Activated CD8-positive, alpha-beta T cell treated with anti-CD3 and anti-CD28 coated beads, Interleukin-2, amount 10 ng/mL, durations not matched to agents 7 days and 5 days (primary cell): ENCODE measurements at regions of chr11 and their contacts with region 1.

Region 1: GRCh38 chr11:46006418-46007070 is 84.1 kb downstream of the LARGE2 start:
- DNase-seq: peak; percentile 57
- ATAC-seq: peak; percentile 76
- H3K4me3 Mint-ChIP-seq: no peak overlapping the region
- H3K27ac Mint-ChIP-seq: no peak overlapping the region
- H3K4me1 Mint-ChIP-seq: no peaks in the 10 kb centered on the region
- H3K27me3 Mint-ChIP-seq: no peaks in the 10 kb centered on the region

Region 2: DNA sequence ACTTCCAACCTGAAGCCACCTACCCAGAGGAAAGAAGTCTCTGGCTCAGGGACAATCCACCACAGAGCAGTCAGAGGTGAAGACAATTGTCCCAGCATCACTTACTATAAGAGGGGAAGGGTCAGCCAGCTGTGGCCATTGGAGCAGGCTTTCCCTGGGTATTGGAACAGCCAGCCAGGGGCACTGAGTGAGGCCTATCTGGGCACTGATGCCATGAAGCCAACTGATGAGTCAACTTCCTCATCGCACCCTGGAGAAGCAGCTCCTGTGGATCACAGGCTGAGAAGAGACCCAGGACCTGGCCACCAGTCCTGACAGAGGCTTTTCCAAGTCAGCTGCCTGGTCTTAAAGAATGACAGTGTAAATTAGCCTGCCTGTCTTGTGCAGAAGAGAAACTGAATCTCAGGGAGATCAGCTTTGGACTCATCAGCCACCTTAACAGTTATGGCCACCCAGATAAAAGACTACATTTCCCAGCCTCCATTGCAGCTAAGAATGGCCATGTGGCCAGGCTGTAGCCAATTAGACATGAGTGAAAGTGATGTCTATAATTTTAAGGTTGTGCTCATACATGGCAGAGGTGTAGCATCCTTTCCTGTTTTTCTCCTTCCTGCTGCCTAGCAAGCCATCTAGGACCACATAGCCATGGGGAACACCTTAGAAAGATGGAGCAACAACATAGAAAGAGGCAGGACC is 360.1 kb before region 1 on chr11:
- CTCF ChIA-PET with region 1: no interaction called
- POLR2A ChIA-PET with region 1: no interaction called
- DNase-seq: no peak
- ATAC-seq: peak; percentile 51
- H3K4me3 Mint-ChIP-seq: no peak overlapping the region
- H3K27ac Mint-ChIP-seq: no peak overlapping the region
- H3K4me1 Mint-ChIP-seq: peaks cover 7% of the 10 kb centered on the region
- H3K27me3 Mint-ChIP-seq: peaks cover 18% of the 10 kb centered on the region

Region 3: GRCh38 chr11:45846974-45847910 is 159.3 kb before region 1 on chr11 and contains the start of gene CRY2:
- CTCF ChIA-PET with region 1: interaction called, 11 read pairs
- POLR2A ChIA-PET with region 1: no interaction called
- DNase-seq: peak; percentile 98
- ATAC-seq: peak; percentile 87
- H3K4me3 Mint-ChIP-seq: peak within 1 kb of the TSS; percentile 77
- H3K27ac Mint-ChIP-seq: peak within 1 kb of the TSS; percentile 86
- H3K4me1 Mint-ChIP-seq: peaks cover 49% of the 10 kb centered on the region
- H3K27me3 Mint-ChIP-seq: peaks cover 15% of the 10 kb centered on the region
- total RNA-seq, gene CRY2: 24.4 to 28.1 TPM

Region 4: DNA sequence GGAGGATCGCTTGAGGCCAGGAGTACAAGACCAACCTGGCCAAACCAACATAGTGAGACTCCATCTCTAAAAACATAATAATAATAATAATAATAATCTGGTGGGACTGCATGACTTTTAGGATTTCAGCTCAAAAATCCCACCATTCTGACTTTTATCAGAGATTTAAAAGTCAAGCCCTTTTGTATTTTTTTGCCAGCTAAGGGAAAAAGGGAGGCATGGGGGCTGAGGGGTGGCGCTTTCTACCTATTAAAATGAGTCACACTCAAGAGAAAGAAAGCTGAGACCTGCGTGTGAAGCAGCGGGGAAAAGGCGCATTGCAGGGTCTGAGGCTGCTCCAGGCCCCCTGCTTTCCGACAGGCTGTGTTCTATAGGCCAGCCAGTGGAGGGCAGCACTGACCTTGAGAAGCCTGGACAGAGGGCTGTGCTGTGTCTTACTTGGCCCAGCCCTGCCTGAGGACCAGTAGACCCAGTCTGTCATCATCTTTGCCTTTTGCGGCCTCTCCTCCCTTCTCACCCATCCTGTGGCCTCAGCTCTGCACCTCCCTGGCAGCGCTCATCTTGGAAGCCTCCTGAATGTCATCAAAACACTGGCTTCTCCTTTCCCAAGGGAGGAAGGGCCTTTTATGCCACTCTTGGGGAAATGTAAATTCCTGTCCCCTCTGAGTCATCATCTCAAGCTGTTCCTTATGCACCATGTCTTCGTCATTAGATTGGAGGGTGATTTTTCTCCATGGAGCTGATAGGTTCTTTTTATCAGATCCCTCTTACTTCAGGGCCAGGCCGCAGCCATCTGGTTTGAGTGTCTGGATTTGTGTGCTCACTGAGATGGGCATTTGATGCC is 133.8 kb before region 1 on chr11:
- CTCF ChIA-PET with region 1: interaction called, 24 read pairs
- POLR2A ChIA-PET with region 1: no interaction called
- DNase-seq: peak; percentile 43
- ATAC-seq: peak; percentile 82
- H3K4me3 Mint-ChIP-seq: no peak overlapping the region
- H3K27ac Mint-ChIP-seq: no peak overlapping the region
- H3K4me1 Mint-ChIP-seq: no peaks in the 10 kb centered on the region
- H3K27me3 Mint-ChIP-seq: no peaks in the 10 kb centered on the region

Region 5: DNA sequence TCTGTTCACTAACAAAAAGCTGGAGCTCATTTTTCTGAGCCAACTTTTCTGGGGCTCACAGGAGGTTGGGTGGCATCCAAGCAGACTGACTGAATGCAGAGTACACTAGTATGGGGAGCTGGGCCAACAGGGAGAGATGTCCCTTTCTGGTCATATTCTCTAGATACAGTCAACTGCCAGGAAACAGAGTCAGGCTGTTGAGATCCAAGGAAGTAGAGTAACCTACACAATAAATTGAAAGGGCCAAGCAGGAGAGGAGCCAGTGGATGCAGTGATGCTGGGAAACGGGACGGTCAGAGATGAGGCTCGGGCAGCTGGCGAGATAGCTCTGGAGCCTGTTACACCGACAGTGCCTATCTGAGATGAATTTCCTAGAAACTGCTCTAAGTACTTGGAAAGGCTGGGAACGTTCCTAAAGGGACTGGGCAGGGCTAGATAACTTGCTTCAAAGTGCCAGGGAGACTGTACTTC is 13.0 kb before region 1 on chr11:
- CTCF ChIA-PET with region 1: interaction called, 29 read pairs
- POLR2A ChIA-PET with region 1: interaction called, 3 read pairs
- DNase-seq: no peak
- ATAC-seq: no peak
- H3K4me3 Mint-ChIP-seq: no peak overlapping the region
- H3K27ac Mint-ChIP-seq: no peak overlapping the region
- H3K4me1 Mint-ChIP-seq: no peaks in the 10 kb centered on the region
- H3K27me3 Mint-ChIP-seq: no peaks in the 10 kb centered on the region

Region 6: GRCh38 chr11:46017341-46017740 is 10.8 kb after region 1 on chr11:
- CTCF ChIA-PET with region 1: interaction called, 15 read pairs
- POLR2A ChIA-PET with region 1: no interaction called
- DNase-seq: no peak
- ATAC-seq: no peak
- H3K4me3 Mint-ChIP-seq: no peak overlapping the region
- H3K27ac Mint-ChIP-seq: no peak overlapping the region
- H3K4me1 Mint-ChIP-seq: no peaks in the 10 kb centered on the region
- H3K27me3 Mint-ChIP-seq: no peaks in the 10 kb centered on the region

Region 7: DNA sequence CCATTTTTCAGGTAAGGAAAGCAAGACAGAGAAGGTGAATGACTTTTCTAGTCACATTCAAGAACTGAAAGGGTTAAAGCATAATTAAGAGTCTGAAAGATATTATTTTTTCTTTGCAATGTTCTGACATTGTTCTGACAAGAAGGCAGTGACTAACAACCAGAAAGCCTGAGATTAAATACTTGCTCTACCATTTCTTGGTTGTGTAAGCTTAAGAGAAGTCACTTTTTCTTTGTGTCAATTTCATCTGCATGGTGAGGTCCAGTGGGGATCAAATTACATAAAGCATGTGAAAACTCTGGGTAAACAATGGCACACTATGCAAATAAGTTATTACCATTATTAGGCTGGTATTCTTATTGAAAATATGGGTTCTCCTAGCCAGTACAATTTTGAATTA is 41.0 kb after region 1 on chr11:
- CTCF ChIA-PET with region 1: no interaction called
- POLR2A ChIA-PET with region 1: no interaction called
- DNase-seq: no peak
- ATAC-seq: no peak
- H3K4me3 Mint-ChIP-seq: no peak overlapping the region
- H3K27ac Mint-ChIP-seq: no peak overlapping the region
- H3K4me1 Mint-ChIP-seq: peaks cover 4% of the 10 kb centered on the region
- H3K27me3 Mint-ChIP-seq: no peaks in the 10 kb centered on the region